ENCODE measurements at regions of chr17 and their contacts with region 1.

Region 1: DNA sequence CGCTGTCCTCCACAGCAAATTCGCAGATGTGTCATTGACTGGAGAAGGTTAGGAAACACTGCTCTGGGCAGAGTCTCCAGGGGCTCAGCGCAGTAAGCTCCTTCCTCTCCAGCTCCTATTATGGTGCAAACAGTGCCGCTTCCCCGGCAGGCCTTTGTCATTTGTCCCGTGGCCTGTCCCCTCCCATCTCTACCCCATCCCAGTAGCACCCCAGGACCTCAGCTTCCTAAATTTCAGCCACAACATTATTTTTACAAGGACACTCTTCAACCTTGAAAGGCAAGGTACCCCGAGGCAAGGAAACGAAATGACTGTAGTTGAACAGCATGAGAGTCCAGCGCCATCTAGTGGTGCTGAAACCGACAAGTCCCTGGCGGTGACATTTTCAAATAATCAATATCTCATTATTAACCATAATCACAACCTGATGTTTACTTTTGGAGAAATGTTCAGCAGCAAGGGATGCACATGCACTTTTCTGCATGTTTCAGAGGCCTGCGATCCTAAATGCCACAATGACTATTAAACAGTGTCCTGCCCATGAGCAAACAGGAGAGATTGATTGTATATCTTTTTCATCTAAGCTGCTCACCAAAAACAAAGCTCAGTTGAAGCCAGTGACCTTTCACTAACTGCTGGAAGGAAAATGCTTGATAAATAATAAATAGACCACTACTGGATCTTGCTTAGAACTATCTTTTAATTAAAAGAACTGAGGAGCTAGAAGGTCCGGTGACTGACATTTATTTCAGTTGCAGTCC is 16.5 kb downstream of the MRPS23 start:
- DNase-seq: peak in 7 of 10 donors; percentile 55 to 89 (median 69)

Region 2: DNA sequence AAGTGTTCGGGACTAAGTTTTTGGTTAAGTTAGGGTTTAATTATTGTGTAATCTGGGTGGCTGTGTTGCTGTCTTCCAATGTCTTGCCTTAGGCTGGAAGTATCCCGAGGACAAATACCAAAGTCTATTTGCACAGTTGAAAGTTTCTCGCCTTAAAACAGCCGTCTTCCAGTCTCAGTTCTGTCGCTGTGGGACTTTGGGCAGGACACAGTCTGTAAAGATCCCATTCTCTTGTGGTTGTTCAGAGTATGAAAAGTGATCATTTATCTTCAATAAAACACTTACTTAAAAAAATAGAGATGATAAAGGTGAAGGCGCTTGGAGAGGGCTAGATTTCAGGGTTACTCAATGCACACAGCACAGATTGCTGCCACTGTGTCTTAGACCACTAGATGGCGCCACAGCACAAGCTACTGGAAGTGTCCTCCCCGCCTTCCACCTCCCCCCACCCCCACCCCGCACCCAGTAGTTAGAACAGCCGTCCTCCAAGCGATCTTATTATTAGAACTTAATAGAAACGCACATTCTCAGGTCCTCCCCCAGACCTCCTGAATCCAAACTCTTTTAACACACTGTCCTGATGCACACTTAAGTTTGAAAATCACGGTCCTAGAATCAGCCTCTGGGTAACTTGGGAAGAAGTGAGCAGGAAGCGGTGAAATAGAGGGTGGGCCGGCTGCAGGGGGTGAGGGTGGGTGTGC is 702.4 kb before region 1 on chr17:
- intact Hi-C with region 1: loop called (anchors 2 kb)
- DNase-seq: peak; percentile 70 to 96 (median 86)

Region 3: DNA sequence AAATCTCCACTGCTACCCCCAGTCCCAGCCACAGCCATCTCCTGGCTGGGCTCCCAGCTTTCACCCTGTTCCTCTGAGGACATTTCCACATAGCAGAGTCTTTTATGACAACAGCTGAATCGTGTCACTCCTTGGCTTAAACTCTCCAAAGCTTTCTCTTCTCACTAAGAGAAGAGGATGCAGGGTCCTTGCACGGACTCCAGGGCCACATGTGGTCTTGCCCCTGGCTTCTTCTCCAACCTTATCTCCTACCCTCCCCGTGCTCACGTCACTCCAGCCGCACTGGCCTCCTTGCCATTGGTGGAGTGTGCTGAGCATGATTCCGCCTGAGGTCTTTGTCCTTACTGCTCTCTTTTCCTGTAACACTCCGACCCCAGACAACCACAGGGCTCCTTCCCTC is 48.3 kb before region 1 on chr17:
- intact Hi-C with region 1: loop called (anchors 5 kb)
- DNase-seq: no peak

Region 4: DNA sequence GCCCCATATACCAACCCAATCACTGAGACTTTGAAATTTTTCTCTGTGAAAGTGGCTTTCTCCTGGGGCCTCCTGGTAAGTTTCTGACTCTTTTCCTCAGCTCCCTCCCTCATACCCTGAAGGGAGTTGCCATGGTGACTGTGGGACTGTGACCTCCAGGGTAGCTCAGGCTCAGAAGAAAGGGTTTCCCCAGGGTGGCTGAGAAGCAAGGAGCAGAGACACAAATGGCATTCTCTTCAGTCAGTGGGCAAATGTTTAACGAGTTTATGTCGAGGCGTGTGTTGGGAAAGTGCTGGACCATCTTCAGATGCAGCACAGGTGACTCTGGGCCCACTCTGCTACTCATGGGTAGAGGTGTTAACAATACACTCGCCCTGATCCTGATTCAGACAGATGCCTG is 30.3 kb before region 1 on chr17:
- intact Hi-C with region 1: no loop called
- DNase-seq: no peak